ENCODE measurements at regions of chr2 and their contacts with region 1.

Region 1: GRCh38 chr2:208489687-208490086 is 83.1 kb downstream of the PTH2R start:
- DNase-seq: no peak
- H3K4me3 ChIP-seq: no peak overlapping the region
- H3K27ac ChIP-seq: no peak overlapping the region
- H3K4me1 ChIP-seq: no peaks in the 10 kb centered on the region
- H3K27me3 ChIP-seq: peaks cover 2% of the 10 kb centered on the region
- CTCF ChIP-seq: no peak

Region 2: DNA sequence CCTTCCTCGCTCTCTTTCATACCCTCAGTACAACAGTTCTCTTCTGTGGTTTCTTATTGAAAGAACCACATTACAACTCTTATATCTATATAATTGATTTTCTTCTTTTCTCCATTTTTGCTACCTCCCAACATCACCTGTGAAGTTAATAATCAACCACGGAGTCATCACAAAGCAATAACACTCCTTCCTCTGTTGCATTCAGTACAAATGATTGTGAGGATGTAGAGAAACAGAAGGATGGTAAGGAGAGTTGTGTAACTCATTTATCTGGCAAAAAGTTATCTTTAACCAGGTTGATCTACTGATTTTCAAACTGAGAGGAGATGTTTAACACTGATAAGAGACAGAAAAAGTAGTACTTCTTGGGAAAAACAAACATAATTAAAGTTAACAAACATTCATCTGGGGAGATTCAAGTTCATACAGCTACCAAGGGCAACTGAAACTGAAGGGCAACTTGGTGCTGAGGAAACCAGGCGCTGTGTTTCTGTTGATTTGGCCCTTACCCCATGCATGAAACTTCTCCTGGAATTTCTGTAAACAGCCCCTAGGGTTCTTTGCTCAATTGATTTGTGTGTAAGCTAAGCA is 249.0 kb before region 1 on chr2:
- CTCF ChIA-PET with region 1: no interaction called
- dilution Hi-C with region 1: no loop called
- in situ Hi-C with region 1: no loop called
- intact Hi-C with region 1: no loop called
- DNase-seq: no peak
- H3K4me3 ChIP-seq: no peak overlapping the region
- H3K27ac ChIP-seq: no peak overlapping the region
- H3K4me1 ChIP-seq: no peaks in the 10 kb centered on the region
- H3K27me3 ChIP-seq: no peaks in the 10 kb centered on the region
- CTCF ChIP-seq: no peak

Region 3: GRCh38 chr2:208437755-208438154 is 51.9 kb before region 1 on chr2:
- CTCF ChIA-PET with region 1: no interaction called
- dilution Hi-C with region 1: no loop called
- in situ Hi-C with region 1: no loop called
- intact Hi-C with region 1: no loop called
- DNase-seq: no peak
- H3K4me3 ChIP-seq: no peak overlapping the region
- H3K27ac ChIP-seq: no peak overlapping the region
- H3K4me1 ChIP-seq: no peaks in the 10 kb centered on the region
- H3K27me3 ChIP-seq: peaks cover 2% of the 10 kb centered on the region
- CTCF ChIP-seq: no peak

Region 4: GRCh38 chr2:208570851-208571764 is 81.4 kb after region 1 on chr2:
- CTCF ChIA-PET with region 1: no interaction called
- dilution Hi-C with region 1: loop called (anchors 5 kb)
- in situ Hi-C with region 1: no loop called
- intact Hi-C with region 1: no loop called
- DNase-seq: no peak
- H3K4me3 ChIP-seq: no peak overlapping the region
- H3K27ac ChIP-seq: no peak overlapping the region
- H3K4me1 ChIP-seq: no peaks in the 10 kb centered on the region
- H3K27me3 ChIP-seq: no peaks in the 10 kb centered on the region
- CTCF ChIP-seq: no peak

Measured in mammary epithelial cell (primary cell).